B cell (primary cell): ENCODE measurements at regions of chr14 and their contacts with region 1.

Region 1: DNA sequence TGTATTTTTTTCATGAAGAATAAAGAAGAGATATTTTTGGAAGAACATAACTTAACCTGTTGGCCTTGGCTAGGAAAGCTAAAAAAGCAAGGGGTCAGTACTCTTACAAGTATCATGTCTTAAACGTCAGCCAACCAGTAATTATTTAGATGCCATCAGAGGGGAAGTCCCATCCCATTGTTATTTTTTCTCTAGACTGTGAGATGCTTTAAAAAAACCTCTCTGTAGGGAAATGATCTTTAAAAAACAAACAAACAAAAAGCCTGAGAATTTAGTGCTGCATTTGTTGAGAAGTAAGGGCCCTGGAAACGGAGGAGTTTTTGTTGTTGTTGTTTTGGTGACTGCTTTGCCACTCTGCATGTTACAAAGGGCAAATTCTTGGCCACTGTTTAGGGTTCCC is 474.0 kb downstream of the ZFP36L1 start:
- DNase-seq: no peak
- ATAC-seq: no peak
- H3K4me3 ChIP-seq: no peak overlapping the region
- H3K4me3 Mint-ChIP-seq: no peak overlapping the region
- H3K27ac ChIP-seq: no peak overlapping the region
- H3K27ac Mint-ChIP-seq: no peak overlapping the region
- H3K4me1 ChIP-seq: peaks cover 41 to 68% of the 10 kb centered on the region in 2 donors
- H3K4me1 Mint-ChIP-seq: peaks cover 68% of the 10 kb centered on the region
- H3K27me3 ChIP-seq: no peaks in the 10 kb centered on the region
- H3K27me3 Mint-ChIP-seq: no peaks in the 10 kb centered on the region
- CTCF ChIP-seq: no peak

Region 2: GRCh38 chr14:67619446-67620216 is 699.2 kb before region 1 on chr14 and contains the start of gene ARG2:
- CTCF ChIA-PET with region 1: no interaction called
- POLR2A ChIA-PET with region 1: no interaction called
- intact Hi-C with region 1: no loop called
- DNase-seq: peak; percentile 98
- ATAC-seq: peak; percentile 94
- H3K4me3 ChIP-seq: peak within 1 kb of the TSS; percentile 57 to 94 (median 81)
- H3K4me3 Mint-ChIP-seq: peak within 1 kb of the TSS; percentile 92
- H3K27ac ChIP-seq: peak within 1 kb of the TSS; percentile 76 to 78
- H3K27ac Mint-ChIP-seq: peak within 1 kb of the TSS; percentile 94
- H3K4me1 ChIP-seq: peaks cover 12 to 18% of the 10 kb centered on the region in 2 donors
- H3K4me1 Mint-ChIP-seq: peaks cover 23% of the 10 kb centered on the region
- H3K27me3 ChIP-seq: peaks cover 0 to 4% (median 0%) of the 10 kb centered on the region in 4 experiments
- H3K27me3 Mint-ChIP-seq: no peaks in the 10 kb centered on the region
- CTCF ChIP-seq: no peak
- total RNA-seq, gene ARG2: 1.8 and 2.0 TPM in 2 replicates

Region 3: GRCh38 chr14:68263563-68264259 is 55.1 kb before region 1 on chr14:
- CTCF ChIA-PET with region 1: no interaction called
- POLR2A ChIA-PET with region 1: no interaction called
- intact Hi-C with region 1: no loop called
- DNase-seq: no peak
- ATAC-seq: no peak
- H3K4me3 ChIP-seq: no peak overlapping the region
- H3K4me3 Mint-ChIP-seq: no peak overlapping the region
- H3K27ac ChIP-seq: peak overlapping the region; percentile 16 to 75
- H3K27ac Mint-ChIP-seq: peak overlapping the region; percentile 69
- H3K4me1 ChIP-seq: peaks cover 70 to 75% of the 10 kb centered on the region in 2 donors
- H3K4me1 Mint-ChIP-seq: peaks cover 84% of the 10 kb centered on the region
- H3K27me3 ChIP-seq: no peaks in the 10 kb centered on the region
- H3K27me3 Mint-ChIP-seq: no peaks in the 10 kb centered on the region
- CTCF ChIP-seq: no peak

Region 4: DNA sequence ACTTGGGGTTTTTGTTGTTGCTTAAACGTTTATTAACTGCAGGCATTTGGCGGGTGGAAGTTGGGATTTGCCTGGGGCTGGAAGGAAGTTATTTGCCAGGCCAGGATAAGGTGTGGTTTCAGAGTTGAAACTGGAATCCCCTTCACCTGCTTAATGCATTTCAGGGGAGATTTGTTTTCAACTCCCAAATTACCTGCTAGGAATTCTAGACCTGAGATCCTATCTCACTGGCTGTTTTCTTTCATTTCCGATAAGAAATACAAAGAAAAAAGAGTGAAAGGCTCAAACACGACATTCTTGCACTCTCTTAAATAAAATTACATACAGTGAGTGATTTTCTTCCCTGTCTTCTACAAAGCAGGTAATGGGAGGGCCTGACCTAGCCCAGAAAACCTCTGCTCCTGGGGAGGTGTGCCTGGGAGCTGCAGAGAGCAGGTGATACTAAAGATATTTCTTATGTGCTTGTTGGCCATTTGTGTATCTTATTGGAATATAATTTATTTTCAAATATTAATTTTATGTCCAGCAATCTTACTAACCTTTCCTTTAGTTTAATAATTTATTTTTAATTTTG is 195.9 kb after region 1 on chr14:
- CTCF ChIA-PET with region 1: no interaction called
- POLR2A ChIA-PET with region 1: interaction called, 11 read pairs
- intact Hi-C with region 1: no loop called
- DNase-seq: no peak
- ATAC-seq: no peak
- H3K4me3 ChIP-seq: no peak overlapping the region
- H3K4me3 Mint-ChIP-seq: no peak overlapping the region
- H3K27ac ChIP-seq: peak overlapping the region; percentile 90
- H3K27ac Mint-ChIP-seq: peak overlapping the region; percentile 88
- H3K4me1 ChIP-seq: peaks cover 60 to 69% of the 10 kb centered on the region in 2 donors
- H3K4me1 Mint-ChIP-seq: peaks cover 59% of the 10 kb centered on the region
- H3K27me3 ChIP-seq: no peaks in the 10 kb centered on the region
- H3K27me3 Mint-ChIP-seq: no peaks in the 10 kb centered on the region
- CTCF ChIP-seq: no peak